Endothelial cell of umbilical vein (primary cell): ENCODE measurements at regions of chr17 and their contacts with region 1.

Region 1: DNA sequence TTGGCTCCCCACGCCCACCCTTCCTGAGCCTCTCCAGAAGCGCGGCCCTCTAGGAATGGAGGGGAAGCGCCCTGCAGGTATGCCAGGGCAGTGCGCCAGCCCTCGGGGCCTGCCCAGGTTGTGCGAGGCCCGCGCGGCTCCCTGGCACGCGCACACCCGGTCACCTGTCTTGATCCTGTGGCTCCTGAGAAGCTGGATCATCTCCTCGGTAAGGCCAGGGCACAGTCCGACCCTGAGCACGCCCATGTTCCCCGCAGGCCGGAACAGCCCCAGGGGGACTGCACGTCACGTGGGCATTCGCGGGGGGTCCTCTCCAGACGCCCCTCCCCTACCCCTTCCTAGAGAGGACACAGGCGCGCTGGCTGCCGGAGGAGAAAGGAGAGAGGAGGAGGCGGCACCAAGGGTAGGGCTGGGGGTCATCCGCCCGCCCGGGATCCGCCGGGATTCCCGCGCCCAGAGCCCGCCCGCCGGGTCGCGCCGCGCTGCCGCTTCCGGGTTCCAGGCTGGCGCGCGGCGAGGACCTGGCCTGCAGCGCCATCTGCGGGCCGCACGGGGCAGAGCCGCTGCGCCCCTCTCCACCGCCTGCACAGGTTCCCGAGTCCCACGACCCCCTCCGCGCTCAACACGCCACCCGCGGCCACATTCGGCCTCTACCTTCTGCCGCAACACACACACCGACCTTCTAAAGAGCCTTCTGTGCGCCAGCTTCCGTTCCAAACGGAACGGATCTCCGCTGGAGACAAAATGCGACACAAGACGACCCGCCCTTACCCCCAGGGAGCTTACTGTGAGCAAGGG is at the start of gene RAD51D:
- DNase-seq: peak; percentile 75
- H3K4me3 ChIP-seq: peak within 1 kb of the TSS; percentile 39 to 83 (median 45)
- H3K27ac ChIP-seq: peak within 1 kb of the TSS; percentile 56
- H3K4me1 ChIP-seq: peaks cover 13% of the 10 kb centered on the region
- H3K27me3 ChIP-seq: no peaks in the 10 kb centered on the region
- CTCF ChIP-seq: peak; percentile 89 to 95
- POLR2A ChIP-seq: peak; percentile 65
- total RNA-seq, gene RAD51D: 19.6 and 27.9 TPM in 2 replicates

Region 2: GRCh38 chr17:34420254-34420766 is 699.3 kb before region 1 on chr17:
- CTCF ChIA-PET with region 1: interaction called, 44 read pairs
- POLR2A ChIA-PET with region 1: no interaction called
- dilution Hi-C with region 1: no loop called
- intact Hi-C with region 1: loop called (anchors 1 kb)
- DNase-seq: peak; percentile 78
- H3K4me3 ChIP-seq: no peak overlapping the region
- H3K27ac ChIP-seq: no peak overlapping the region
- H3K4me1 ChIP-seq: no peaks in the 10 kb centered on the region
- H3K27me3 ChIP-seq: peaks cover 25 to 26% of the 10 kb centered on the region in 2 experiments
- CTCF ChIP-seq: peak; percentile 88 to 93
- POLR2A ChIP-seq: no peak

Region 3: GRCh38 chr17:34637548-34638525 is 481.7 kb before region 1 on chr17:
- CTCF ChIA-PET with region 1: no interaction called
- POLR2A ChIA-PET with region 1: no interaction called
- dilution Hi-C with region 1: no loop called
- intact Hi-C with region 1: loop called (anchors 1 kb)
- DNase-seq: peak; percentile 68
- H3K4me3 ChIP-seq: no peak overlapping the region
- H3K27ac ChIP-seq: no peak overlapping the region
- H3K4me1 ChIP-seq: peaks cover 3% of the 10 kb centered on the region
- H3K27me3 ChIP-seq: peaks cover 2 to 9% of the 10 kb centered on the region in 2 experiments
- CTCF ChIP-seq: peak; percentile 72 to 97
- POLR2A ChIP-seq: no peak

Region 4: GRCh38 chr17:34998205-34998604 is 121.4 kb before region 1 on chr17:
- CTCF ChIA-PET with region 1: interaction called, 48 read pairs
- POLR2A ChIA-PET with region 1: no interaction called
- dilution Hi-C with region 1: loop called (anchors 25 kb)
- intact Hi-C with region 1: loop called (anchors 1 kb)
- DNase-seq: peak; percentile 78
- H3K4me3 ChIP-seq: no peak overlapping the region
- H3K27ac ChIP-seq: no peak overlapping the region
- H3K4me1 ChIP-seq: peaks cover 2% of the 10 kb centered on the region
- H3K27me3 ChIP-seq: no peaks in the 10 kb centered on the region
- CTCF ChIP-seq: peak; percentile 92 to 95
- POLR2A ChIP-seq: no peak

Region 5: GRCh38 chr17:35063514-35064223 is 55.9 kb before region 1 on chr17 and contains the start of gene RFFL:
- CTCF ChIA-PET with region 1: interaction called, 7 read pairs
- POLR2A ChIA-PET with region 1: no interaction called
- dilution Hi-C with region 1: no loop called
- intact Hi-C with region 1: loop called (anchors 2 kb)
- DNase-seq: peak; percentile 95
- H3K4me3 ChIP-seq: no peak within 1 kb of the TSS
- H3K27ac ChIP-seq: peak within 1 kb of the TSS; percentile 81
- H3K4me1 ChIP-seq: peaks cover 7% of the 10 kb centered on the region
- H3K27me3 ChIP-seq: no peaks in the 10 kb centered on the region
- CTCF ChIP-seq: peak in 1 of 2 donors; percentile 11
- POLR2A ChIP-seq: peak; percentile 28
- total RNA-seq, gene RFFL: 14.1 and 14.2 TPM in 2 replicates

Region 6: DNA sequence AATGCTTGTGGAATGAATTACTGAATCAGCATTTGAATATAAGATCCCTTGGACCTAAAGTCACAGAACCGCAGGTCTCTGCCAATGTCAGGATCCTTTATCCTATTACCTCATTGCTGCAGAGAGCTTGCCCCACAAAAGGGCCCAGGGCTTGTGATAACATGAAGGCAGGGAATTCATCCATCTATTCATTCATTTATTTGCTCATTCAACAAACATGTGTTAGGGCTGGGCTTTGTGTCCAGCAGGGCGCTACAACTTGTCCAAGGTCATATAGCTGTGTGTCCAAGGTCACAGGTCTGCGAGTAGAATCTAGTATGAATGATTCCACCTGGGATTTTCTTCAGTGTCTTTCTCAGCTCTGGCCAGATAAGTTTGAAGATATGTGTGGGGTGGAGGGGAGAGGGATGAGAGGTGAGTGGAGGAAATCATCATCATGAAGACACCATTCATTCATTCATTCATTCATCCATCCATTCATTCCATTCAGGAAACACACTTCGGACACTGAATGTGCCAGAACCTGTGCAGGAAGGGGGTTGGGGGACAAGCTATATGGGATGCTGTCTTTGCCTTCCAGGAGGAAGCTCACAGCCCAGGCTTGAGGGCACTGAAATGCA is 26.8 kb after region 1 on chr17:
- CTCF ChIA-PET with region 1: no interaction called
- POLR2A ChIA-PET with region 1: no interaction called
- dilution Hi-C with region 1: no loop called
- intact Hi-C with region 1: no loop called
- DNase-seq: no peak
- H3K4me3 ChIP-seq: no peak overlapping the region
- H3K27ac ChIP-seq: no peak overlapping the region
- H3K4me1 ChIP-seq: no peaks in the 10 kb centered on the region
- H3K27me3 ChIP-seq: peaks cover 4 to 8% of the 10 kb centered on the region in 2 experiments
- CTCF ChIP-seq: no peak
- POLR2A ChIP-seq: no peak

Region 7: GRCh38 chr17:35183332-35183731 is 63.8 kb after region 1 on chr17:
- CTCF ChIA-PET with region 1: no interaction called
- POLR2A ChIA-PET with region 1: no interaction called
- dilution Hi-C with region 1: no loop called
- intact Hi-C with region 1: no loop called
- DNase-seq: no peak
- H3K4me3 ChIP-seq: no peak overlapping the region
- H3K27ac ChIP-seq: no peak overlapping the region
- H3K4me1 ChIP-seq: no peaks in the 10 kb centered on the region
- H3K27me3 ChIP-seq: no peaks in the 10 kb centered on the region
- CTCF ChIP-seq: no peak
- POLR2A ChIP-seq: no peak